Activated CD4-positive, alpha-beta T cell treated with anti-CD3 and anti-CD28 coated beads for 36 hours (primary cell): ENCODE measurements at regions of chr16 and their contacts with region 1.

Region 1: GRCh38 chr16:19717771-19718602 is at the starts of genes IQCK and KNOP1:
- DNase-seq: peak; percentile 93
- ATAC-seq: peak; percentile 93
- H3K4me3 Mint-ChIP-seq: peak within 1 kb of the TSS; percentile 95
- H3K27ac Mint-ChIP-seq: peak within 1 kb of the TSS; percentile 87
- H3K4me1 Mint-ChIP-seq: peaks cover 23% of the 10 kb centered on the region
- H3K27me3 Mint-ChIP-seq: no peaks in the 10 kb centered on the region
- total RNA-seq, gene IQCK: 2.7 to 3.5 TPM
- total RNA-seq, gene KNOP1: 28.9 to 29.5 TPM

Region 2: GRCh38 chr16:18932243-18932981 is 785.6 kb before region 1 on chr16:
- CTCF ChIA-PET with region 1: no interaction called
- POLR2A ChIA-PET with region 1: no interaction called
- intact Hi-C with region 1: loop called in 1 of 2 experiments (anchors 5 kb)
- DNase-seq: no peak
- ATAC-seq: no peak
- H3K4me3 Mint-ChIP-seq: no peak overlapping the region
- H3K27ac Mint-ChIP-seq: no peak overlapping the region
- H3K4me1 Mint-ChIP-seq: peaks cover 4% of the 10 kb centered on the region
- H3K27me3 Mint-ChIP-seq: no peaks in the 10 kb centered on the region

Region 3: DNA sequence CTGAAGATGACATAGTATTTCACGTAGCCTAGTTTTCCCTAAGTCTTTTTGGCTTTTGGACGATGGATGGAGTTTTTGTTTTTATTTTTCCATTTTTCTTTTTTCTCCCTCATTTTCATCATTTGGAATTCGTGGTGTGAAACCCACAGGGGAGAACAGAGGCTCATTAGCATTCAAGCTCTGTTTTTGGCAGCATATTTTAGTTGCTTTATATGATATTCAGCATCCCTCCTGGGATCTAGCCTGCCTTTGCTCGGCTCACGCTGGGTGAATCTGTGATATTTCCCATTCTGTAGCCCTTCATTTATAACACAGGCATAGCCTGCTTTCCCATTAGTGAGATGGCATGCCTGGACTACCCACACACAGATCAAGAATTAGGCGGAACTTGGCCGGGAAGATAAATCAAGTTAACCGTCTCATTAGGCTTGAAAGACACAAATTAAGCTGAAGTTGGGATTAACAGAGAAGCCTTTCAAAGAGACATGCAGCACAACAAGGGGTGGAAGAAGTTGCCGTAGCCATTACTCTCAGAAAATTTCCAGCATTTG is 452.5 kb before region 1 on chr16:
- CTCF ChIA-PET with region 1: no interaction called
- POLR2A ChIA-PET with region 1: no interaction called
- intact Hi-C with region 1: no loop called
- DNase-seq: no peak
- ATAC-seq: no peak
- H3K4me3 Mint-ChIP-seq: no peak overlapping the region
- H3K27ac Mint-ChIP-seq: no peak overlapping the region
- H3K4me1 Mint-ChIP-seq: no peaks in the 10 kb centered on the region
- H3K27me3 Mint-ChIP-seq: peaks cover 2% of the 10 kb centered on the region

Region 4: GRCh38 chr16:19521471-19522396 is 196.3 kb before region 1 on chr16 and contains the start of gene GDE1:
- CTCF ChIA-PET with region 1: no interaction called
- POLR2A ChIA-PET with region 1: interaction called, 4 read pairs
- intact Hi-C with region 1: loop called in 1 of 2 experiments (anchors 1 kb)
- DNase-seq: peak; percentile 97
- ATAC-seq: peak; percentile 83
- H3K4me3 Mint-ChIP-seq: peak within 1 kb of the TSS; percentile 94
- H3K27ac Mint-ChIP-seq: peak within 1 kb of the TSS; percentile 90
- H3K4me1 Mint-ChIP-seq: peaks cover 45% of the 10 kb centered on the region
- H3K27me3 Mint-ChIP-seq: no peaks in the 10 kb centered on the region
- total RNA-seq, gene GDE1: 13.8 to 18.1 TPM

Region 5: DNA sequence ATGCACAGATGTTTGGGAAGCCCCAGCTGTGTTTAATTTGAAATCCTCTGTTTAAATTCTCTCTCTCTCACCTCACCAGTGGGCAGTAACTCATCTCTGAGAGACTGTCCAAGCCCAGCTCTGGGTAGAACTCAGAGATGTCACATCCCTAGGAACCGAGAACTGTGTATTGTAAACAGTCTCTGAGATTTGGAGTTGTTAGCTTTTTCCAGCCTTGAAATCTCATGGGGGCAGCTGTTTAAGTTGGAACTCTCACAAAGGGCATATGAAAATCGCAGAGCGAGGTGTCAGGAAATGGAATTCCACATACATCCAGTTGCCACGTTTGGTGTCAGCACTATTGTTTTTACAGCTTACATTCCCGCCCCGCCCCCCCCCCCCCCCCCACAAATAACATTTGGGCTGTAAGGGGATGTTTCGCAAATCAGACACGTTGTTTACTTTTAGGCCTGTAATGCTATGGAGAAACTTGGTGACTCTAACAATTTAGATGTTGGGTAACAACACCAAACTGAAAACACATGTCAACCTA is 128.2 kb before region 1 on chr16:
- CTCF ChIA-PET with region 1: no interaction called
- POLR2A ChIA-PET with region 1: no interaction called
- intact Hi-C with region 1: loop called in 1 of 2 experiments (anchors 5 kb)
- DNase-seq: no peak
- ATAC-seq: no peak
- H3K4me3 Mint-ChIP-seq: no peak overlapping the region
- H3K27ac Mint-ChIP-seq: no peak overlapping the region
- H3K4me1 Mint-ChIP-seq: peaks cover 15% of the 10 kb centered on the region
- H3K27me3 Mint-ChIP-seq: no peaks in the 10 kb centered on the region

Region 6: GRCh38 chr16:19886073-19886941 is 168.3 kb after region 1 on chr16:
- CTCF ChIA-PET with region 1: interaction called, 3 read pairs
- POLR2A ChIA-PET with region 1: no interaction called
- intact Hi-C with region 1: loop called (anchors 1 to 2 kb)
- DNase-seq: peak; percentile 90
- ATAC-seq: peak; percentile 79
- H3K4me3 Mint-ChIP-seq: peak overlapping the region; percentile 71
- H3K27ac Mint-ChIP-seq: peak overlapping the region; percentile 47
- H3K4me1 Mint-ChIP-seq: peaks cover 26% of the 10 kb centered on the region
- H3K27me3 Mint-ChIP-seq: peaks cover 18% of the 10 kb centered on the region